PC-9 (cell line): ENCODE measurements at regions of chr16 and their contacts with region 1.

Region 1: DNA sequence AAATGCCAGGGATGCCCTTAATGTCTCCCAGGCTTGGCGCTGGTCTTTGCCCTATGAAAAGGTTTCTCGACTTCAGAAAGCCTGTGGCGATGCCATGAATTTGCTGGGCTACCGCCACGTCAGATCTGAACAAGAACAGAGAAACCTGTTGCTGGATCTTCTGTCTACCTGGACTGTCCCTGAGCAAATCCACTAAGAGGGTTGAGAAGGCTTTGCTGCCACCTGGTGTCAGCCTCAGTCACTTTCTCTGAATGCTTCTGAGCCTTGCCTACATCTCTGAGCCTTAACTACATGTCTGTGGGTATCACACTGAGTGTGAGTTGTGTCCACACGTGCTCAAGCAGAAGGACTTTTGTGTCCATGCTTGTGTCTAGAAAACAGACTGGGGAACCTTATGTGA is 11.4 kb downstream of the CHST4 start:
- DNase-seq: peak; percentile 62 to 65
- H3K4me3 ChIP-seq: no peak overlapping the region
- H3K27ac ChIP-seq: no peak overlapping the region
- H3K4me1 ChIP-seq: no peaks in the 10 kb centered on the region
- H3K27me3 ChIP-seq: no peaks in the 10 kb centered on the region
- CTCF ChIP-seq: peak; percentile 83

Region 2: DNA sequence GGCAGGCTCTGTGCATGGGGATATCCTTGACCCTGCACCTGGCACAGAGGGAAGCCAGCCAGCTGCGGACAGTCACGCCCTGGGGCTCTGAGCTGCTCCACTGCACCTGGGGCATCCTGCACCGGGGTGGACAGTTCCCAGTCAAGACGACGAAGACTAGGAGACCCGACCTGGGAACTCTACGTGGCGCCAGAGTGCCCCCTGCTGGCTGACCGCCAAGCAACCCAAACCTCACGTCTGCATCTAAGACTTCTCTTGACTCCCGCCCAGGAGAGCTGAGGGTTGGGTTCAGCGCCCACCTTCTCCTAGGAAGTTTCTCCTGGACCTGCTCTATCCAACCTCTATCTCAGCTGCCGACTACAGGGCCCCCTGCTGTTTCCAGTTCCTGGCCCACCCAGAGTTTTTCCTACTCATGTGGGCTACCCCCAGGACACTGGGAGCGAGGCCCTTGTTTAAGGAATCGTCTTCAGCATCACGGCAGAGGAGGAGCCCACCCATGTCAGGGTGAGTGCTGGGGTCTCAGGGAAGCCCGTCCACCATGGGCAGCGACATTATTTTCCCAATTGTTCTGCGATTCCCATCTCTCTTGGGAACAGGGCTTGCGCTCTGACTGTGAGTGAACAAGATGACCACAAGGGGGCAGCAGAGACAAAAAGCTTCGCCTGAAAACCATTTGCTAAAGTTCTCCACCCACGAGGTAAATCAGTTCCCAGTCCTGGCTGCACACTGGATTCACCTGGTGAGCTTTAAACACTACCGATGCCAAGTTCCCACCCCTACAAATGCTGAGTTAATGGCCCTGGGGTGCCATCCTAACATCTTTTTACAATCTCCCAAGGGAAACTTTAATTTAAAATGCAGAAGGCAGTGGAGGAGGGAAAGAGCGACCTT is 125.1 kb before region 1 on chr16:
- CTCF ChIA-PET with region 1: no interaction called
- POLR2A ChIA-PET with region 1: no interaction called
- intact Hi-C with region 1: loop called (anchors 1 kb)
- DNase-seq: peak; percentile 64 to 79
- H3K4me3 ChIP-seq: peak overlapping the region; percentile 20; the same call in 1 of the 2 replicates
- H3K27ac ChIP-seq: no peak overlapping the region
- H3K4me1 ChIP-seq: 0 out of 2 replicates have a peak, but pooled peaks cover 3% of the 10 kb centered on the region
- H3K27me3 ChIP-seq: peaks cover 20% of the 10 kb centered on the region; the same call in 1 of the 2 replicates
- CTCF ChIP-seq: peak; percentile 90

Region 3: GRCh38 chr16:71484006-71484893 is 53.4 kb before region 1 on chr16:
- CTCF ChIA-PET with region 1: no interaction called
- POLR2A ChIA-PET with region 1: interaction called, 9 read pairs
- intact Hi-C with region 1: loop called (anchors 5 kb)
- DNase-seq: peak; percentile 72 to 79
- H3K4me3 ChIP-seq: peak overlapping the region; percentile 97
- H3K27ac ChIP-seq: peak overlapping the region; percentile 82
- H3K4me1 ChIP-seq: peaks cover 15% of the 10 kb centered on the region
- H3K27me3 ChIP-seq: no peaks in the 10 kb centered on the region
- CTCF ChIP-seq: no peak

Region 4: DNA sequence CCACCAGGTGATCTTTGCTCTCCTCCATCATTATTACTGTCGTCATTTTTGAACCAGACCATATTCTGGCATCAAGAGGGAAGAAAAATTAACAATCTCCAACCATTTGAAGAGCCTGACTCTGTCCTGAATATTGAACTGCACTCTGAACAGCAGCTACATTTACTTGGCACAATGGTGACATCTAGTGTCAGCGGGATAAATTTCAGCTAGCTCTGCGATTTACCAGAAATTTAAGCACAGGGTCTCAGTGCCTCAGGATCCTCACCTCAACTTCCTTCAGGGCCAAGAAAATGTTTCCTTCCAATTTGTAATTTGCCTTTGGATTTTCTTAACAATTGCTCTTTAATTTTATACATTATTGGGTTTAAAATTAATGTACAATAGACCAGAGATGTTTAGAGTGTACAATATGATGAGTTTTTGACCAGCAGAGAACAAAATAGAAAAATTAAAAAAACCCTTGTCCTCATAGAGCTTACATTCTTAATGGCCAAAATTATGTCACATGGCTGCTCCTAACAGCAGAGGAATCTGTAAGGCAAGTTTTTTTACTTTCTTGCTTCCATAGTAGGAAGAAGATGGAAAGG is 37.8 kb before region 1 on chr16:
- CTCF ChIA-PET with region 1: interaction called, 4 read pairs
- POLR2A ChIA-PET with region 1: no interaction called
- intact Hi-C with region 1: loop called (anchors 2 kb)
- DNase-seq: peak; percentile 40 to 56
- H3K4me3 ChIP-seq: no peak overlapping the region
- H3K27ac ChIP-seq: no peak overlapping the region
- H3K4me1 ChIP-seq: peaks cover 5% of the 10 kb centered on the region
- H3K27me3 ChIP-seq: no peaks in the 10 kb centered on the region
- CTCF ChIP-seq: peak; percentile 85